Esophagus muscularis mucosa (tissue), 4 donors: ENCODE measurements at regions of chr14 and their contacts with region 1.

Region 1: GRCh38 chr14:31456841-31457664 is at the start of gene DTD2:
- DNase-seq: peak; percentile 96
- H3K4me3 ChIP-seq: peak within 1 kb of the TSS; percentile 66 to 78 (median 72)
- H3K27ac ChIP-seq: peak within 1 kb of the TSS; percentile 85 to 94 (median 88)
- H3K4me1 ChIP-seq: peaks cover 12 to 35% (median 31%) of the 10 kb centered on the region in 4 donors
- H3K27me3 ChIP-seq: no peaks in the 10 kb centered on the region
- CTCF ChIP-seq: peak in 1 of 3 experiments; percentile 17
- EP300 ChIP-seq: no peak
- POLR2A ChIP-seq: no peak
- total RNA-seq, gene DTD2: 27.8 to 41.1 (median 32.2) TPM

Region 2: DNA sequence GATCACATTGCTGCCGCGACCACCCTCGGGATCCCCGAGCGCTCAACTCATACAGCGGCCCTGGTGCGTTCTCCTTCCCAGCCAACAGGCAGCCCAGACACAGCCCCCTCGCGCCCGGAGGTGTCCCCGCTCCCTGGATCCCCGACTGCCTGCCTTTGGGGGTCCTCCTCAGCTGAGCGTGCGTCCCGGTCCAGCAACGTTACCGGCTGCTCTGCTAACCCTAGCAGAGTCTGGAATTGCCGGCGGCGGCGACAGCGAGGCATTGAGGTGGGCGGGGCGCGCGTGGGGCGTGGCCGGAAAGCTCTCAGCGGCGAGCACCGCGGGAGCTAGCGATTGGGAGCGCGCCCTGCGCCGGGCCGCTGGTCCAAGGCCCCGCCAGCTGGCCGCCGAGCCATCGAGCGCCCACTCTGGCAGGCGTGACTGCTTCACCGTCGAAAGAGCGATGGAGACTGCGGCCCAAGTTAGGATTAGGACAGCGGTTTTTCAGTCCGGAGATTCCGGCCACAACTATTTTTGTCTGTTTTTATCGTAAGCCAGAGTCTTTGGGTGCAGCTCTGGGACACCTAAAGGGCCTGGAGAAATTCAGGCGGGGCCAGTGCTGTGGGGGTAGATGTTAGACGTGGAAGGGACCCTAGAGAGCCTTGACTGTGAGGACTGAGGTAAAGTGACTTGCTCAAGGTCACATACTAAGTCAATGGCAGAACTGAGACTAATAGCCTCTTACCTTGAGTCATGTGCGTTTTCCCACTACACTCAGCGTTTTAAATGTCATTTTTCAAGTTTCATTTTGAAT is 36.5 kb before region 1 on chr14 and contains the start of gene HEATR5A:
- intact Hi-C with region 1: loop called (anchors 5 kb)
- DNase-seq: peak; percentile 96
- H3K4me3 ChIP-seq: peak within 1 kb of the TSS; percentile 82 to 98 (median 91)
- H3K27ac ChIP-seq: peak within 1 kb of the TSS; percentile 89 to 95 (median 90)
- H3K4me1 ChIP-seq: peaks cover 13 to 43% (median 35%) of the 10 kb centered on the region in 4 donors
- H3K27me3 ChIP-seq: no peaks in the 10 kb centered on the region
- CTCF ChIP-seq: peak in 2 of 3 experiments; percentile 29 to 39
- EP300 ChIP-seq: no peak
- POLR2A ChIP-seq: peak; percentile 95
- total RNA-seq, gene HEATR5A: 24.1 to 38.2 (median 28.2) TPM

Region 3: DNA sequence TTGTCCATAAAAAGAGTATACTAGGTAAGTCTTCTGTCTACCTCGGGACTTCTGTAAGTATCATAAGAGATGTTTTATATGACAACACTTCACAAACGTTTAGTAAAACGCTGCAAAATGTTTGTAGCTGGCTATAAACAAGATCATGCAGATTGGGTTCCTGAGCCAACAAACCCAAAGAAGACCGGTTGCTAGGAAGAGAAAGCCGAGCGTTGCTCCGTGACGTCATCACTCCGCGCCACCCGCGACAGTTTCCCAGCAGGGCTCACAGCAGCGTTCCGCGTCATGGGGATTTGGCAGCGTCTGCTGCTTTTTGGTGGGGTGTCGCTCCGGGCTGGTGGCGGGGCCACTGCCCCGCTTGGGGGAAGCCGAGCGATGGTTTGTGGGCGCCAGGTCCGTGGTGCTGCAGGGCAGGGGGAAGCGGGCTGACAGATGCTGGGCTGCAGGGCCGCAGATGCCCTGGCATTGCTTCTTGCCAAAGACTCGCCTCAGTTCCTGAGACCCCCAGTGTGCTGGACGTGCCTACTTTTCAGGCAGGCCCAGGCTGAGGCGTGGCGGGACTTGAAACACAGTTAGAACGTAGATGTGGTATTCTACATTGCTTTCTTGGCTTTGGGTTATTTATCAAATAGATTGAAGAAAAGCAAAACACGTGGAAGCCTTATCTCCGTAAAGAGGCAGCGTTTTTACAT is 104.2 kb after region 1 on chr14 and contains the start of gene NUBPL:
- intact Hi-C with region 1: loop called (anchors 2 kb)
- DNase-seq: peak; percentile 99
- H3K4me3 ChIP-seq: peak within 1 kb of the TSS; percentile 85 to 99 (median 97)
- H3K27ac ChIP-seq: peak within 1 kb of the TSS; percentile 89 to 92 (median 90)
- H3K4me1 ChIP-seq: peaks cover 11 to 35% (median 21%) of the 10 kb centered on the region in 4 donors
- H3K27me3 ChIP-seq: no peaks in the 10 kb centered on the region
- CTCF ChIP-seq: no peak
- EP300 ChIP-seq: no peak
- POLR2A ChIP-seq: peak; percentile 13
- total RNA-seq, gene NUBPL: 10.3 to 13.6 (median 12.8) TPM

Region 4: GRCh38 chr14:31582286-31582691 is 125.2 kb after region 1 on chr14:
- intact Hi-C with region 1: no loop called
- DNase-seq: no peak
- H3K4me3 ChIP-seq: no peak overlapping the region
- H3K27ac ChIP-seq: peak overlapping the region in 2 of 4 donors; percentile 4 to 36
- H3K4me1 ChIP-seq: peaks cover 5 to 40% (median 34%) of the 10 kb centered on the region in 4 donors
- H3K27me3 ChIP-seq: no peaks in the 10 kb centered on the region
- CTCF ChIP-seq: no peak
- EP300 ChIP-seq: no peak
- POLR2A ChIP-seq: no peak